ENCODE measurements at regions of chr13 and their contacts with region 1.

Region 1: DNA sequence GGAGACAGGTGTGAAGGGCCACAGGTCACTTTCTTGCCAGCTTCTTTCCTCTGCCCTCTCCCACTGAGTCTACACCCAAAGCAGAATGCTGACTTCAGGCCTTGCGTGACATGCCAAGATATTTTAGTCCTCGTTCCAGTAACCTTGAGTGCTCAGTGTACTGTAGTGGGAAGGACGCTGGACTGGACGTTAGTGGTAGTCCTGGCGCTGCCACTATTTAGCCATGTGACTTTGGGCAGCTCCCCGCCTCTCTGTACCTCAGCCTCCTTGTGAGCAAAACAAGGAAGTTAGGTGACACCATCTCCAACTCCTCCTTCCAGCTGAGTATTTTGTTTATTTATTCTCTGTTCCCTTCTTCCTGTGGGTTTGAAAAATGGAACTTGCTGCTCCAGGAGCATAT is 86.1 kb downstream of the FRY start:
- DNase-seq: peak; percentile 65 to 93
- H3K4me3 ChIP-seq: no peak overlapping the region
- H3K27ac ChIP-seq: peak overlapping the region; percentile 68 to 72
- H3K4me1 ChIP-seq: peaks cover 0 to 78% (median 14%) of the 10 kb centered on the region in 4 donors
- H3K27me3 ChIP-seq: no peaks in the 10 kb centered on the region
- CTCF ChIP-seq: no peak

Region 2: DNA sequence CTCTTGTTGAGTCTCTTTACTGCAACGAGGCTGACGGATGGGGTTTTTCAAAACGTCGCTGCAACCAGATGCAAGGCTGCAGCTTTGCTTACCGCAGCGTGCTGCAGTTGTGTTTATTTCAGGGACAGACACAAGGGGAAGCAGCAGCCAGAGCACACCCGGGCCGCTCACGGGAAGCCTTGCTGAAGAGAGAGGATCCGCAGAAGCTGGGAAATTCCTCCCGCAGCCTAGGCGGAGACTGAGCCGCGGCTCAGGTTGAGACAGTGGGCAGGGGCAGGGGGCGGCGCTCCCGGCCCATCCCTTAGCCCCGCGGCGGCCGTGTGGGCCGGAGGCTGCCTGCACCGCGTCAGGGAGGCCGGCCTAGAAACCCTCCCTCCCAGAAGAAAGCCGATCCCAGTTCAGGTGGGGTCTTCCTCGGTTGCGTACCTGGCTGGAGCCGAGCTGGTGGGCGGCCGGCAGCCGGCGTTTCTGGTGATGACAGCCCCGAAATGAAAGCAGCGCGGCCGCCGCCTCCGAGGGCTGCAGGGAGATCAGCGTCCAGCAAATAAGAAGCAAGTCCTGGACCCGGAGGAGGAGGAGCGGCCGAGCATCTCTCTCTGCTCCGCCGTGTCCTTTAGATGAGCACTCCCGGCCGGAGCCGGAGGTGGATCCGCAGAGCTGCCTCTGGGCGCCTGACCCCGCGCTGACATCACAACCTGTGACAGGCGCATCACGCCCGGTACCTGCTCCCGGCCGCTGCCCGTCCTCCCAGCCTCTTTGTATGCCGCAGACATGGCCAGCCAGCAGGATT is 86.5 kb before region 1 on chr13 and contains the start of gene FRY:
- intact Hi-C with region 1: loop called (anchors 10 kb)
- DNase-seq: peak; percentile 63 to 81
- H3K4me3 ChIP-seq: peak within 1 kb of the TSS; percentile 83 to 84
- H3K27ac ChIP-seq: peak within 1 kb of the TSS; percentile 82 to 88
- H3K4me1 ChIP-seq: peaks cover 0 to 47% (median 17%) of the 10 kb centered on the region in 4 donors
- H3K27me3 ChIP-seq: no peaks in the 10 kb centered on the region
- CTCF ChIP-seq: peak in 1 of 2 experiments; percentile 13

Region 3: GRCh38 chr13:32676242-32676641 is 558.5 kb after region 1 on chr13:
- intact Hi-C with region 1: no loop called
- DNase-seq: no peak
- H3K4me3 ChIP-seq: no peak overlapping the region
- H3K27ac ChIP-seq: no peak overlapping the region
- H3K4me1 ChIP-seq: no peaks in the 10 kb centered on the region
- H3K27me3 ChIP-seq: no peaks in the 10 kb centered on the region
- CTCF ChIP-seq: no peak

Measured in tibial artery (tissue), 4 donors.